Activated CD8-positive, alpha-beta T cell treated with anti-CD3 and anti-CD28 coated beads, Interleukin-2, amount 10 ng/mL, durations not matched to agents 7 days and 5 days (primary cell): ENCODE measurements at regions of chr12 and their contacts with region 1.

Region 1: GRCh38 chr12:13255792-13256691 is 59.5 kb downstream of the EMP1 start:
- DNase-seq: peak; percentile 84
- ATAC-seq: peak; percentile 100
- H3K4me3 Mint-ChIP-seq: no peak overlapping the region
- H3K27ac Mint-ChIP-seq: no peak overlapping the region
- H3K4me1 Mint-ChIP-seq: peaks cover 3% of the 10 kb centered on the region
- H3K27me3 Mint-ChIP-seq: peaks cover 9% of the 10 kb centered on the region

Region 2: DNA sequence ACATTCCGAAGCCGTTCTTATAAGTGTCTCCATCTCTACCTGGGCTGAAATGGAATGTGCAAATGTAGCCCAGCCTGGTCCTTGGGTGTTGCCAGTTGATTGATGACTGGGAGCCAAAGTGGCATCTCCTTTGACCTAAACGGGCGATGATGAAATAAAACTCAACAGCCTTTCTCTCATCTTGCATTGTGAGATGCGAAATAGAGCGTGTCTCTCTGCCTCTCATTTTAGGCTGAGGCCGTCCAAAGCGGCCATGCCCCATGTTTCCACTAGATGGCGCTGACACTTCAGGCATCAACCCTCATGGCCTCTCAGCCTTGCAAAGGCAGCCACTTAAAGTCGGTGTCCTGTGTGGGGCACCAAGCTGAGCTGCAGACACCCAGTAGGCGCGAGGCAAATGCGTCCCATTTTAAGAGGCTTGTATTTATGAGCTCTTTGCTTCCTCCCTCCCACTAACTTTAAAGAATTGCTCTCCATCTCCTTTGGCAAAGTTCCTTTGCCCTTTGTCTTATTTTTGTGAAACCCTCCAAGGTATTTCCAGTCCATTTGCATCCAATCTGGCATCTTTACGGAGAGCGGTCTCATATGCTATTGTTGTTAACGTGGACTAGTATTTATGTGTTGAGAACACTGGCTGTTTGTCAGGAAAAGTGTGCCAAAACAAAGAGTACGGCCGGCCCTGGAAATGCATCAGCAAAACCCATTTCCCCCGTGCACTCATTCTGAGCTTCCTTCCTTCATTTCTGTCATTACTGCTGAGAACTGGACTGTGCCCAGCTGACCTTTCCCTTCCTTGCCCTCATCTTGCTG is 339.7 kb before region 1 on chr12:
- CTCF ChIA-PET with region 1: interaction called, 10 read pairs
- POLR2A ChIA-PET with region 1: no interaction called
- DNase-seq: peak; percentile 90
- ATAC-seq: peak; percentile 99
- H3K4me3 Mint-ChIP-seq: no peak overlapping the region
- H3K27ac Mint-ChIP-seq: no peak overlapping the region
- H3K4me1 Mint-ChIP-seq: peaks cover 10% of the 10 kb centered on the region
- H3K27me3 Mint-ChIP-seq: peaks cover 17% of the 10 kb centered on the region

Region 3: GRCh38 chr12:13270817-13271216 is 14.8 kb after region 1 on chr12:
- CTCF ChIA-PET with region 1: interaction called, 24 read pairs
- POLR2A ChIA-PET with region 1: no interaction called
- DNase-seq: no peak
- ATAC-seq: no peak
- H3K4me3 Mint-ChIP-seq: no peak overlapping the region
- H3K27ac Mint-ChIP-seq: no peak overlapping the region
- H3K4me1 Mint-ChIP-seq: no peaks in the 10 kb centered on the region
- H3K27me3 Mint-ChIP-seq: peaks cover 25% of the 10 kb centered on the region

Region 4: GRCh38 chr12:13278249-13278787 is 22.3 kb after region 1 on chr12:
- CTCF ChIA-PET with region 1: interaction called, 24 read pairs
- POLR2A ChIA-PET with region 1: no interaction called
- DNase-seq: peak; percentile 62
- ATAC-seq: peak; percentile 97
- H3K4me3 Mint-ChIP-seq: no peak overlapping the region
- H3K27ac Mint-ChIP-seq: no peak overlapping the region
- H3K4me1 Mint-ChIP-seq: peaks cover 3% of the 10 kb centered on the region
- H3K27me3 Mint-ChIP-seq: peaks cover 32% of the 10 kb centered on the region

Region 5: GRCh38 chr12:13534645-13535398 is 278.8 kb after region 1 on chr12:
- CTCF ChIA-PET with region 1: interaction called, 11 read pairs
- POLR2A ChIA-PET with region 1: no interaction called
- DNase-seq: peak; percentile 60
- ATAC-seq: no peak
- H3K4me3 Mint-ChIP-seq: no peak overlapping the region
- H3K27ac Mint-ChIP-seq: no peak overlapping the region
- H3K4me1 Mint-ChIP-seq: no peaks in the 10 kb centered on the region
- H3K27me3 Mint-ChIP-seq: no peaks in the 10 kb centered on the region